Ovary (tissue), 10 donors: ENCODE measurements at regions of chr6 and their contacts with region 1.

Region 1: GRCh38 chr6:130322673-130323268 is 43.0 kb upstream of the TMEM200A start:
- DNase-seq: peak; percentile 30 to 60 (median 48)
- H3K4me3 ChIP-seq: no peak overlapping the region
- H3K27ac ChIP-seq: no peak overlapping the region
- H3K4me1 ChIP-seq: no peaks in the 10 kb centered on the region
- H3K27me3 ChIP-seq: no peaks in the 10 kb centered on the region
- CTCF ChIP-seq: peak; percentile 75 to 80 (median 78)
- EP300 ChIP-seq: no peak
- POLR2A ChIP-seq: no peak

Region 2: DNA sequence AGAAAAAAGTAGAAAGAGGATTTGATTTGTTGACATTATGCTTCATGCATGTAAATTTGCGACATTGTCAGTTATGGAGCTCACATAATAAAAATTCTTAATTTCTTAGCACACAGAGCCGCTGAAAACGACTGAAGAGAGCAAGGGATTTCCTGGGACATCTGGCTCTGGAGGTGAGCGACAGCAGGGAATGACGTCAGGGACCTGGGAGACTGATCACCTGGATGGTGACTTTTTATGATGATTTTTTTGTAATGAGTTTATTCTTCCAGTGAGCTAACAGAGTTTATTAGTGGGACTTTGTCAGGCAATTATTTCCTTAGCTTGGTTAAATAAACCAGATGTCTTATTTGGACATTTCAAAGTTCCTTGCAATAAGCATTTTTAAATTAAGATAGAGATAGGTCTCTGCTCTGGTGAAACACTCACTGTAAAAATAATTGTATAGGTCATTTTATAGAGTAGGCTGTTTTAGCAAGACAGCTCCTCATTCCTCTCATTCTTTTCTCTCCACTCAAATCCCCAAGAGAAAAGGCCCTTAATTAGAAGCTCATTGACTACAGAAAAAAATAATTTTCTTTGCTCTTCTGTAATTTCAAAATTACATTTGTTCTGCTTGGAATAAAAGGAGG is 62.4 kb after region 1 on chr6:
- intact Hi-C with region 1: no loop called
- DNase-seq: no peak
- H3K4me3 ChIP-seq: no peak overlapping the region
- H3K27ac ChIP-seq: no peak overlapping the region
- H3K4me1 ChIP-seq: no peaks in the 10 kb centered on the region
- H3K27me3 ChIP-seq: no peaks in the 10 kb centered on the region
- CTCF ChIP-seq: no peak
- EP300 ChIP-seq: no peak
- POLR2A ChIP-seq: no peak

Region 3: GRCh38 chr6:130843575-130844320 is 521.0 kb after region 1 on chr6:
- intact Hi-C with region 1: loop called in 2 of 4 experiments (anchors 10 kb)
- DNase-seq: no peak
- H3K4me3 ChIP-seq: no peak overlapping the region
- H3K27ac ChIP-seq: no peak overlapping the region
- H3K4me1 ChIP-seq: peaks cover 7% of the 10 kb centered on the region
- H3K27me3 ChIP-seq: no peaks in the 10 kb centered on the region
- CTCF ChIP-seq: peak in 2 of 3 donors; percentile 45 to 67
- EP300 ChIP-seq: no peak
- POLR2A ChIP-seq: no peak

Region 4: DNA sequence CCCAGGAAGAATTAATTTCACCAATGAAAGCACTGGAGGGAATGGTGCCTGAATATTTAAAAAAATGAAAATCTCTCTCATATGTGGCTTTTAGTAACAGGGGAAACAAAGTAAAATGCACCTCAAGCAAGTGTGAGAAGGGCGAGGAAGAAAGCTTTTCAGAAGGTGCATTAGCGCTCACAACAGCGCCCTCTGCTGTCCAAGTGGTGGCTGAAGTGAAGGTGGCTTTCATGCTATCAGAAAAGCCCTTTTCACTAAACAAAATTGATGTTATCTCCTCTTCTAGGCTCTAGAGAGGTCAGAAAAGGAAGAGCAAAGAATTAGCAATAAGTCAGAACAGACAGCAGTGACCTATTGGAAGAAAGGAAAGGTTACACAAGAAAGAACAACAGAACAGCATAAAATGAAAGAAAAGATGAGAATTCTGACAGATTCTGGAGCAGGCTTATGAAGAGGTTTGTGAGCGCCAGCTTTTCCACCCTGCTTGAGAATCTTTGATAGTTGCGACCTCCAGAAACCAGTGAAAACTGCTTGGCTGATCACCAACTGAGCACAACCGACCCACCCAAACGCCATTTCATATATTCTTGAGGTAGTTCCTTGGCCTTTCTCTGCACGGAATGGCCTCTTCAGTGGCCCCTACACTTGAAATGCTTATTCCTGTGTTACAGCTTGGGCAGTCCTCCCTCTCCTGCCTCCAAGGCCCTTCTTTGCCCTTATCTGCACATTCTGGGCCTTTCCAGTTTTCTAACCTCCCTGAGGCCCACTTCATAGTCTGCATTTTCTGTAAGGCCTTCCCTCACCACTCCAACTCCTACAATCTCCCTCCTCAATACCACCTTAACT is 549.7 kb after region 1 on chr6:
- intact Hi-C with region 1: loop called in 2 of 4 experiments (anchors 5 to 10 kb)
- DNase-seq: peak; percentile 59 to 83 (median 78)
- H3K4me3 ChIP-seq: no peak overlapping the region
- H3K27ac ChIP-seq: no peak overlapping the region
- H3K4me1 ChIP-seq: peaks cover 2% of the 10 kb centered on the region
- H3K27me3 ChIP-seq: no peaks in the 10 kb centered on the region
- CTCF ChIP-seq: peak; percentile 32 to 70 (median 63)
- EP300 ChIP-seq: no peak
- POLR2A ChIP-seq: no peak